Naive thymus-derived CD8-positive, alpha-beta T cell (primary cell): ENCODE measurements at regions of chr10 and their contacts with region 1.

Region 1: DNA sequence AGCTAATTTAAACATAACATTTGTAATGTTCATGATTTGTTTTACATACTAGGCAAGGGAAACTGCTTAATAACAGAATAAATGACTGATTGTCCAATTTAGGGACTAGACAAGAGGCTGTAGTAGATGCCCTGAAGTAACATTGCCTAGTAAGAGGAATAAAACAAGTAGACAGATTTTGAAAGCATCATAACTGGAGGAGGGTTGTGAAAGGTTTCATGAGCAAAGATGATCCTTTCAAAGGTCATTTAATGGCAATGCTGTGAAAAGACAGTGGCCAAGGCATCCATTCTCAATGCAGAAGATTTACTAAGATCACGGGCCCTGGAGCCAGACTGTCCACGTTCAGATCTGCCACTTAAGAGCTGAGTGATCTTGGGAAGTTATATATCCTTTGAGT is 44.8 kb upstream of the HHEX start:
- DNase-seq: no peak
- ATAC-seq: no peak
- H3K4me3 Mint-ChIP-seq: no peak overlapping the region
- H3K27ac Mint-ChIP-seq: no peak overlapping the region
- H3K4me1 Mint-ChIP-seq: peaks cover 0 to 1% (median 0%) of the 10 kb centered on the region in 4 donors
- H3K27me3 Mint-ChIP-seq: no peaks in the 10 kb centered on the region

Region 2: GRCh38 chr10:92592761-92593618 is 51.9 kb before region 1 on chr10 and contains the start of gene KIF11:
- POLR2A ChIA-PET with region 1: no interaction called
- DNase-seq: peak; percentile 89 to 98 (median 94)
- ATAC-seq: peak; percentile 81 to 85
- H3K4me3 Mint-ChIP-seq: peak within 1 kb of the TSS; percentile 94 to 99 (median 98)
- H3K27ac Mint-ChIP-seq: peak within 1 kb of the TSS; percentile 97 to 100 (median 100)
- H3K4me1 Mint-ChIP-seq: peaks cover 16 to 42% (median 30%) of the 10 kb centered on the region in 4 donors
- H3K27me3 Mint-ChIP-seq: no peaks in the 10 kb centered on the region
- polyA plus RNA-seq, gene KIF11: 0.20 to 0.72 (median 0.42) TPM

Region 3: DNA sequence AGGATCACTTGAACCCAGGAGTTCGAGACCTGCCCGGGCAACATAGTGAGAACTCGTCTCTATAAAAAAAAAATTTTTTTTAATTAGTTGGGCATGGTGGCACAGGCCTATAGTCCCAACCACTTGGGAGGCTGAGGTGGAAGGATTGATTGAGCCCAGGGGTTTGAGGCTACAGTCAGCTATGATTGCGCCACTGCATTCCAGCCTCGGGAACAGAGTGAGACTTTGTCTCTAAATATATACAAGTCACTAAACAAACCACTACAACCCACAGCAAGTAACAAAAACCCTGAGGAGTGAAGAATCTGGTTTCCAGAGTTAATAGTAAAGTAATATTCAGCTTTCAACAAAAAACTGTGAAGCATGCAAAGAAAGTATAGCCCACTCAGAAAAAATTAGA is 12.1 kb after region 1 on chr10:
- POLR2A ChIA-PET with region 1: interaction called, 10 read pairs
- DNase-seq: no peak
- ATAC-seq: no peak
- H3K4me3 Mint-ChIP-seq: no peak overlapping the region
- H3K27ac Mint-ChIP-seq: no peak overlapping the region
- H3K4me1 Mint-ChIP-seq: no peaks in the 10 kb centered on the region
- H3K27me3 Mint-ChIP-seq: peaks cover 0 to 2% (median 0%) of the 10 kb centered on the region in 5 donors